Heart left ventricle (tissue), 16 donors: ENCODE measurements at regions of chr9 and their contacts with region 1.

Region 1: DNA sequence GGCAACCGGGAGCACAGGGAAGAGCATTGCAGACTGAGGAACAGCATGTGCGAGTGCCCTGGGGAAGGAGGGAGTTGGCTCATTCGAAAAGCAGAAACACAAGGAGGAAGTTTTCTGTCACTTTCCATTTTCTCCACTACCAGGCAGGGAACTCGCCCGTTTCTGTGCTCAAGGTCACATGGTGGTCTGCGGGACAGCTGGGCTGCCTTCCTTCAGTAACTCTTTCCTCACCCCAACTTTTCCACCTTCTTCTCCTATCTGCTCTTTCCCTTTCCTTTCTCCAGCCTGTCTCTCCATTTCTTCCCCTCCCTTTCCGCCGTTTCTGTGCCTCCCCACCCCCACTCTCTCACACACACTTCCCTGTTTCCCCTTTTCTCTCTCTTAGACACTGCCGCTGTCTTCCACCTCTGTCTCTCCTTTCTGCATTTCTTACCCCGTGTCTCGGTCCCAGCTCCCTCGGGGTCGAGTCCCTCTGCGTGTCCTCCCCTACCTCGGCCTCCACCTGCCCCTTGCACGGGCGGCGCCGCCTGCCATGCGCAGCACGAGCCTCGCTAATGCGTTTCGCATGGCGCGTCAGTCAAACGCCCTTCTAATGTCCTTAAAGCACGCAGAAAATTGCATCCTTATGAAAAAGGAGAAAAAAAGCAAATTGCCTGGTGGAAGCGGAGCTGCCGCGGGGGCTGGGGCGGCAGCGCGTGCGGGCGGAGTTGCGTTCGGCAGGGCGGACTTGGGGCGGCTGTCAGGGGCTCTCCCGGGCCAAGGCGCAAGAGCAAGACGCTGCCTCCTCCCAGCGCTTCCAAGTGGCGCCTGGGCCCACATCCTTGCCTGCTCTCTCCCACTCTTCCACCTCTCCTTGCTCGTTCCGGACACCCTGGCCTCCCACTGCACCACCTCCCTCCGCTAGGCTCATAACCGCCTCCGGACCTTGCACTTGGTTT is 9.5 kb downstream of the BARX1 start:
- DNase-seq: peak in 1 of 5 donors; percentile 61
- ATAC-seq: peak in 2 of 4 donors; percentile 8 to 24
- H3K4me3 ChIP-seq: peak overlapping the region in 9 of 12 donors; percentile 3 to 50 (median 36)
- H3K27ac ChIP-seq: no peak overlapping the region
- H3K4me1 ChIP-seq: peaks cover 0 to 25% (median 6%) of the 10 kb centered on the region in 12 donors
- H3K27me3 ChIP-seq: peaks cover 40 to 99% (median 81%) of the 10 kb centered on the region in 9 donors
- CTCF ChIP-seq: no peak
- POLR2A ChIP-seq: no peak

Region 2: GRCh38 chr9:93820667-93821306 is 124.9 kb before region 1 on chr9:
- intact Hi-C with region 1: loop called in 2 of 10 experiments (anchors 5 to 10 kb)
- DNase-seq: no peak
- ATAC-seq: no peak
- H3K4me3 ChIP-seq: no peak overlapping the region
- H3K27ac ChIP-seq: no peak overlapping the region
- H3K4me1 ChIP-seq: no peaks in the 10 kb centered on the region
- H3K27me3 ChIP-seq: peaks cover 0 to 41% (median 14%) of the 10 kb centered on the region in 9 donors
- CTCF ChIP-seq: no peak
- POLR2A ChIP-seq: no peak

Region 3: DNA sequence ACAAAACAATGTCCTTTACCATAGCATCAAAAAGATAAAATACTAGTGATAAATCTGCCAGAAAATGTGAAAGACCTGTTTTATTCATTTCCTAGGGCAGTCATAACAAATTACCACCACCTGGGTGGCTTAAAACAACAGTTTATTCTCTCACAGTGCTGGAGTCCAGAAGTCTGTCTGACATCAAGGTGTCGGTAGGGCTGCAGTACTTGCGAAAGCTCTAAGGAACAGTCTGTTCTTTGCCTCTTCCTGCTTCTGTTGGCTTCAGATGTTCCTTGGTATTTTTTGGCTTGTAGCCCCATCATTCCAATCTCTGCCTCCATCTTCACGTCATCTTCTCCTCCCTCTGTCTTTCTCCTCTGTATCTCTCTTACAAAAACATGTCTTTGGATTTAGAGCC is 189.6 kb after region 1 on chr9:
- intact Hi-C with region 1: no loop called
- DNase-seq: peak in 2 of 5 donors; percentile 39 to 47
- ATAC-seq: peak; percentile 57 to 89 (median 80)
- H3K4me3 ChIP-seq: no peak overlapping the region
- H3K27ac ChIP-seq: peak overlapping the region; percentile 31 to 89 (median 64)
- H3K4me1 ChIP-seq: peaks cover 0 to 33% (median 21%) of the 10 kb centered on the region in 12 donors
- H3K27me3 ChIP-seq: no peaks in the 10 kb centered on the region
- CTCF ChIP-seq: no peak
- POLR2A ChIP-seq: no peak